Activated T-helper 2 cell treated with anti-CD3 and anti-CD28 coated beads, Interferon-gamma antibody, Interleukin-2, Interleukin-4, amounts not matched to agents 10 μg/mL and 5 μg/mL and 100 μg/mL, durations not matched to agents 14 hours and 24 hours and 36 hours (primary cell): ENCODE measurements at regions of chr9 and their contacts with region 1.

Region 1: DNA sequence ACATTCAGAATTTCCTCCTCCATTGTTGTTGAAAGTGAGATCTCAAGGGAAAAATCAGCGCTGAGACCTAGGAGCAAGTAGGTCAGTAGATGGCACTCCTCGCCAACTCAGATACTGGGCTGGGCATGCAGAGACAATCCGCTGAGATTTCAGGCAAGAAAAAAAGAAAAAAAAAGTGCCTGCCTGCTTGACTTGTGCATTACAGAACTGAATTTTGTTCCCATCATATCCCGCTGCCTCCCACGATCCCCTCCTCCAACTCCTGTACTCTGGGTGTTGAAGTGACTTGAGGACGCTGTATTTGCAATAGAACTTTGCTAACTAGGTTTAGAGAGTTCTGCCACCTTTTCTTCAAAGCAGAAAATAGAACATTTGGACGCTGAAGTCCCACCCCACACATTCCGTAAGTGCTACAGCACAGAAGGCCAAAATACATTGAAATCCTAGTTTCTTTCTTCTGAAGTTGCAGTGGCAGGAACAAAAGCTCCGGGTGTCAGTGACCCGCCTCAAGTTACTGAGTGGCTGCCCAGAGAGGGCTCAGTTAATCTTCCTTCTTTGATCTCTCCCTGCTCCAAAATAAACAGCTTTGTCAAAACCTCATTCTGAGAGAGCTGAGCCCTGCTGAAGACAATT is 265.8 kb downstream of the MLLT3 start:
- DNase-seq: no peak
- H3K4me3 Mint-ChIP-seq: no peak overlapping the region
- H3K27ac Mint-ChIP-seq: no peak overlapping the region
- H3K4me1 Mint-ChIP-seq: peaks cover 47% of the 10 kb centered on the region
- H3K27me3 Mint-ChIP-seq: no peaks in the 10 kb centered on the region

Region 2: GRCh38 chr9:20043035-20043434 is 313.5 kb before region 1 on chr9:
- intact Hi-C with region 1: loop called (anchors 5 kb)
- DNase-seq: no peak
- H3K4me3 Mint-ChIP-seq: peak overlapping the region; percentile 71
- H3K27ac Mint-ChIP-seq: peak overlapping the region; percentile 70
- H3K4me1 Mint-ChIP-seq: peaks cover 30% of the 10 kb centered on the region
- H3K27me3 Mint-ChIP-seq: peaks cover 2% of the 10 kb centered on the region

Region 3: GRCh38 chr9:20331095-20331685 is 25.3 kb before region 1 on chr9:
- intact Hi-C with region 1: loop called (anchors 2 kb)
- DNase-seq: no peak
- H3K4me3 Mint-ChIP-seq: no peak overlapping the region
- H3K27ac Mint-ChIP-seq: peak overlapping the region; percentile 21
- H3K4me1 Mint-ChIP-seq: peaks cover 31% of the 10 kb centered on the region
- H3K27me3 Mint-ChIP-seq: peaks cover 6% of the 10 kb centered on the region

Region 4: GRCh38 chr9:20343325-20343724 is 13.2 kb before region 1 on chr9:
- intact Hi-C with region 1: no loop called
- DNase-seq: no peak
- H3K4me3 Mint-ChIP-seq: no peak overlapping the region
- H3K27ac Mint-ChIP-seq: no peak overlapping the region
- H3K4me1 Mint-ChIP-seq: no peaks in the 10 kb centered on the region
- H3K27me3 Mint-ChIP-seq: no peaks in the 10 kb centered on the region

Region 5: GRCh38 chr9:20552874-20553575 is 196.5 kb after region 1 on chr9:
- intact Hi-C with region 1: loop called (anchors 2 kb)
- DNase-seq: no peak
- H3K4me3 Mint-ChIP-seq: peak overlapping the region; percentile 41
- H3K27ac Mint-ChIP-seq: peak overlapping the region; percentile 25
- H3K4me1 Mint-ChIP-seq: peaks cover 67% of the 10 kb centered on the region
- H3K27me3 Mint-ChIP-seq: no peaks in the 10 kb centered on the region

Region 6: DNA sequence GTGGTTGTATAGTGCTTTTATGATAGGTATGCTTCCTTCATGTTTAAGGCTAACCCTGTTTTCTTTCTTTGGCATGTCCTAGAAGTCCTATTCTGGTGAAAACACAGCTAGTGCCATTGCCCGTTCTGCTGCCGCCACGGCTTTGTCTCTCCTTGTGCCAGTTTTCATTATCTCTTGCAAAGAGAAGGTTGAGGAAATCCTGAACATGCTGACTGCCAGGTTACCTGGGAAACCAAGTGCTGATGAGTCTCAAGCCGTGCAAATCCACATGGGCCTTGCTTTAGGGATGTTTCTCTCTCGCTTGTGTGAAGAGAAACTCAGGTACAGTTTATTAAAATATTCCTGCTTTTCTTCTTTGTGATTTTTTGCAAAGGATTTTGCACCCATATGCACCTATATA is 572.8 kb after region 1 on chr9:
- intact Hi-C with region 1: loop called (anchors 5 kb)
- DNase-seq: no peak
- H3K4me3 Mint-ChIP-seq: no peak overlapping the region
- H3K27ac Mint-ChIP-seq: no peak overlapping the region
- H3K4me1 Mint-ChIP-seq: peaks cover 25% of the 10 kb centered on the region
- H3K27me3 Mint-ChIP-seq: no peaks in the 10 kb centered on the region

Region 7: GRCh38 chr9:21110708-21111576 is 754.4 kb after region 1 on chr9:
- intact Hi-C with region 1: loop called (anchors 5 kb)
- DNase-seq: no peak
- H3K4me3 Mint-ChIP-seq: no peak overlapping the region
- H3K27ac Mint-ChIP-seq: no peak overlapping the region
- H3K4me1 Mint-ChIP-seq: no peaks in the 10 kb centered on the region
- H3K27me3 Mint-ChIP-seq: peaks cover 27% of the 10 kb centered on the region